H1 (cell line): ENCODE measurements at regions of chr10 and their contacts with region 1.

Region 1: GRCh38 chr10:118712930-118713634 is 41.7 kb downstream of the CACUL1 start:
- DNase-seq: peak in 1 of 2 experiments; percentile 69
- H3K4me3 ChIP-seq: no peak overlapping the region
- H3K27ac ChIP-seq: no peak overlapping the region; the same call in 1 of the 2 replicates
- H3K4me1 ChIP-seq: peaks cover 0 to 2% (median 0%) of the 10 kb centered on the region in 4 experiments; a peak in 1 of 7 replicates
- H3K27me3 ChIP-seq: no peaks in the 10 kb centered on the region
- CTCF ChIP-seq: peak; percentile 62 to 87 (median 70)
- EP300 ChIP-seq: no peak
- POLR2A ChIP-seq: no peak
- RAD21 ChIP-seq: peak; percentile 64 to 73

Region 2: GRCh38 chr10:118669020-118669791 is 43.9 kb before region 1 on chr10:
- CTCF ChIA-PET with region 1: interaction called, 13 read pairs
- POLR2A ChIA-PET with region 1: no interaction called
- DNase-seq: no peak
- H3K4me3 ChIP-seq: no peak overlapping the region
- H3K27ac ChIP-seq: no peak overlapping the region
- H3K4me1 ChIP-seq: no peaks in the 10 kb centered on the region; a peak in 1 of 7 replicates
- H3K27me3 ChIP-seq: no peaks in the 10 kb centered on the region
- CTCF ChIP-seq: no peak
- EP300 ChIP-seq: no peak
- POLR2A ChIP-seq: no peak
- RAD21 ChIP-seq: no peak

Region 3: DNA sequence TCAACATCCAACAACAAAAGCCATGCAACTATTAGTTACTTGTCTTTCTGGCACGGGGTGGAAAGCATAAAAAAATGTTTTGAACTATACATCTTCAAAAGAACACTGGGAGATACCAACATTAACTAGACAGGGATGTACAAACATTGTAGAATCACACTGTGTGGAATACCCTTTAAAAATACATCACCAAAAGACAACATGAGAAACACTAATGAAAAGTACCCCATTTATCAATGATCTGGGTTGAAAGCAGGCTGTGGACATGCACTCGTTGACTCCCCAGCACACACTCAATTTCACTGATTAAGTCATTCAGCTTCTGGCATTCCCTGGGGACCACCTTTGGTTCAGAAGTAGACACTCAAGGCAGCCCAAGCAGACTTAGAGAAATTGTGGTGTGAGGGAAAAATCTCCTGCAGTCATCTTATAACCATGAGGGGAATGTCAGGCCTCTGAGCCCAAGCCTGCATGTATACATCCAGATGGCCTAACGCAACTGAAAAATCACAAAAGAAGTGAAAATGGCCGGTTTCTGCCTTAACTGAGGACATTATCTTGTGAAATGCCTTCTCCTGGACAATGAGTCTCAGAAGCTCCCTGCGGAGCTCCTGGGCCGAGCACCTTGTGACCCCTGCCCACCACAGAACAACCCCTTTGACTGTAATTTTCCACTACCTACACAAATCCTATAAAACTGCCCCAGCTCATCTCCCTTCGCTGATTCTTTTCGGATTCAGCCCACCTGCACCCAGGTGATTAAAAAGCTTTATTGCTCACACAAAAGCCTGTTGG is 11.4 kb before region 1 on chr10:
- CTCF ChIA-PET with region 1: interaction called, 30 read pairs
- POLR2A ChIA-PET with region 1: interaction called, 4 read pairs
- DNase-seq: no peak
- H3K4me3 ChIP-seq: peak overlapping the region in 1 of 4 experiments; percentile 24; a peak in 1 of 8 replicates
- H3K27ac ChIP-seq: peak overlapping the region; percentile 60; the same call in 1 of the 2 replicates
- H3K4me1 ChIP-seq: peaks cover 0 to 11% (median 4%) of the 10 kb centered on the region in 4 experiments; a peak in 4 of 7 replicates
- H3K27me3 ChIP-seq: no peaks in the 10 kb centered on the region
- CTCF ChIP-seq: no peak
- EP300 ChIP-seq: no peak
- POLR2A ChIP-seq: no peak
- RAD21 ChIP-seq: no peak

Region 4: GRCh38 chr10:118725886-118726500 is 12.9 kb after region 1 on chr10:
- CTCF ChIA-PET with region 1: interaction called, 16 read pairs
- POLR2A ChIA-PET with region 1: no interaction called
- DNase-seq: no peak
- H3K4me3 ChIP-seq: no peak overlapping the region
- H3K27ac ChIP-seq: no peak overlapping the region
- H3K4me1 ChIP-seq: no peaks in the 10 kb centered on the region; a peak in 1 of 7 replicates
- H3K27me3 ChIP-seq: no peaks in the 10 kb centered on the region
- CTCF ChIP-seq: no peak
- EP300 ChIP-seq: no peak
- POLR2A ChIP-seq: no peak
- RAD21 ChIP-seq: no peak

Region 5: DNA sequence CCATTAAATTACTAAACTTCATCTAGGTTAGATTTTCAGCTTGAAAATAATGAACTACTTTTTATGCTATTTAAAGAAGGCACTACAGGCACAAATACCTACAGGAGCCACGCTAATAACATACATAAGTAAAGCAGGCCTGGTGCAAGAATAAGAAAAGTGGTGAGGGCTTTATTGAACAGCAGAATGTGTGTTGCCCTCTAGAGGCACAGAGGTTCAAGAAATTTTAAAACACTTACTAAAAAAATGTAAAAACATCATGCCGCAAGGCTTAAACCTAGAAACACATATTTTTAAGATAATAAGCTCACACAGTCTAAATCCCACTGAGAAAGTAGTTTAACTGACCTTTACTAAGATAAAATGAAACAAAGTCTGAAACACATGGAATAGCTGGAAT is 21.4 kb after region 1 on chr10:
- CTCF ChIA-PET with region 1: interaction called, 28 read pairs
- POLR2A ChIA-PET with region 1: no interaction called
- DNase-seq: no peak
- H3K4me3 ChIP-seq: no peak overlapping the region
- H3K27ac ChIP-seq: no peak overlapping the region
- H3K4me1 ChIP-seq: peaks cover 0 to 8% (median 0%) of the 10 kb centered on the region in 4 experiments; a peak in 3 of 7 replicates
- H3K27me3 ChIP-seq: no peaks in the 10 kb centered on the region
- CTCF ChIP-seq: peak in 1 of 3 experiments; percentile 4; a peak in 1 of 4 replicates
- EP300 ChIP-seq: no peak
- POLR2A ChIP-seq: no peak
- RAD21 ChIP-seq: no peak

Region 6: GRCh38 chr10:118818621-118819221 is 105.6 kb after region 1 on chr10:
- CTCF ChIA-PET with region 1: no interaction called
- POLR2A ChIA-PET with region 1: no interaction called
- DNase-seq: no peak
- H3K4me3 ChIP-seq: no peak overlapping the region
- H3K27ac ChIP-seq: no peak overlapping the region
- H3K4me1 ChIP-seq: no peaks in the 10 kb centered on the region
- H3K27me3 ChIP-seq: no peaks in the 10 kb centered on the region
- CTCF ChIP-seq: no peak
- EP300 ChIP-seq: no peak
- POLR2A ChIP-seq: no peak
- RAD21 ChIP-seq: no peak

Region 7: GRCh38 chr10:118983263-118983662 is 270.2 kb after region 1 on chr10:
- CTCF ChIA-PET with region 1: no interaction called
- POLR2A ChIA-PET with region 1: no interaction called
- DNase-seq: no peak
- H3K4me3 ChIP-seq: no peak overlapping the region
- H3K27ac ChIP-seq: no peak overlapping the region
- H3K4me1 ChIP-seq: peaks cover 0 to 3% (median 3%) of the 10 kb centered on the region in 4 experiments; a peak in 2 of 7 replicates
- H3K27me3 ChIP-seq: no peaks in the 10 kb centered on the region
- CTCF ChIP-seq: no peak
- EP300 ChIP-seq: no peak
- POLR2A ChIP-seq: no peak
- RAD21 ChIP-seq: no peak